Common myeloid progenitor, CD34-positive (primary cell): ENCODE measurements at regions of chr6 and their contacts with region 1.

Region 1: DNA sequence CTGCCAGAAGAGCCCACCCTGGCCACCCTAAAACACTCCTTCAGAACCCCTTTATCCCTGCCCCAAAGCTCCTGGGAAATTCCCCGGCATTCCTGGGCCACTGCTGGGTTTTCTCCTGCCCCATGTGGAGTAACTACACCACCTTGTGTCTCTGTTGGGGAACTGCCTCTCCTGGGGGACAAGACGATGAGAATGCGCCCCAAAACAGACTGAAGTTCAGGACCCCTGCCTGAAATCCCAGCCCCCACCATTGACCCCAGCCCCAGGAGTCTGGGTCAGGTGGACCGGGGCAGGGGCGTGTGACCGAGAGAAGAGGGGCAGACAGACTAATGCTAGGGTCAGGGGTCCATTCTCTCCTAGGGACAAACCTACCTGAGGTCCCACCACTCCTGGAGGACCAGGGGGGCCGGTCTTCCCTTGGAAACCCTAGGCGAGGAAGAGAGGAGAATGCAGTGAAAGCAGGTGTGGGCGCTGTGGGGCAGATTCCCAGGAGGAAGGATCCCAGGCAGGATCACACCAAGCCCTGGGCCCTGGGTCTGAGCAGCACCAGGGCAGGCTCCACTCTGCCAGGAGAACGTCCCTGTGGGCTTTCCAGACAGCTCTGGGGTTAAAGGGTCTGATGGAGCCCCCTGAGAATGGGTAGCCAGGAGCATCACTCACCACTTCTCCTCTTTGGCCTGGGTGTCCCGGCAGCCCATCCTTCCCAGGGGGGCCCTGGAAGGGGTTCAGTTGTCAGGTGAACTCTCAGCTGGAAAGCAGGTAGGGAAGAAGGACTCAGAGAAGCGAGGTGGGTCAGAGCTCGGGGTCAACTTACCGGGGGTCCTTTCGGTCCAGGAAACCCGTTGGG is 19.4 kb downstream of the COL11A2 start:
- DNase-seq: peak; percentile 29 to 44 (median 31)
- H3K4me3 ChIP-seq: no peak overlapping the region
- H3K27ac ChIP-seq: no peak overlapping the region
- H3K4me1 ChIP-seq: no peaks in the 10 kb centered on the region
- H3K27me3 ChIP-seq: peaks cover 0 to 2% (median 0%) of the 10 kb centered on the region in 5 experiments

Region 2: DNA sequence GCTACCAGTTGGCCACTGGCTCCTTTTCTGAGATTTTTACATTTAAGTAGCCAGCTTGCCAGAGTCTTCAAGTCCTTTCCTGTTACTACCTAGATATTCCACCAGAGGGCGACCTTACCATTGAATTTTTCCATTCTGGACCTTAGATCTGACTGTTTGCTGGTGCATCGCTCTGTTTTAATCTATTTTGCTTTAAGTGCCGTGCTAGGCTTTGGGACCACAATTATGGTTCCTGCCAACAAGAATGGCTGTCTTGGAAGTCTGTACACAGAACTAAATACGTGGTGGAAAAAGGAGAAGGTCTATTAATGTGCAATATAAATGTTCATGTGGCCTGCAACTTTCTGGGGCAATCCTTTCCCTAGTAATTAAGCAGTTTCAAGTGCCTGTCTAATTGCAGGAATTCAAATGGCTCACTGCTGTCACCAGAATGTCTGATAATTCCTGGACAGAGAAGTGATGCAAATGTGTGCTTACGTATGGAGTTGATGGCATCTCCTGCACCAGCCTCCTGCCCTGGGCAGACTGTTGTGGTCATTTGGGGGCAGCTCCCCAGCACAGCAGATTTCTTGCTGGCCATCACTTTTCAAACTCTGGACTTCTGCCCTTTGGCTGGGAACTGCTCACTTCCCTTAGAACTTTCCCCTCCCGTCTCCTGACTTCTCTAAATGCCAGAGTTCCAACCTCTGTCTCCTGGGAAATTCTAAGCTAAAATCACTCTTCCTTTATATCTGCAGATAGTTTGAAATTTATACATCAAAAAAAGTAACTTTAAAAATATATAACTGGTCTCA is 157.9 kb before region 1 on chr6:
- CTCF ChIA-PET with region 1: interaction called, 16 read pairs
- POLR2A ChIA-PET with region 1: no interaction called
- DNase-seq: peak; percentile 89 to 95 (median 92)
- H3K4me3 ChIP-seq: peak overlapping the region in 1 of 7 experiments; percentile 26
- H3K27ac ChIP-seq: no peak overlapping the region
- H3K4me1 ChIP-seq: peaks cover 19 to 30% (median 28%) of the 10 kb centered on the region in 4 experiments
- H3K27me3 ChIP-seq: no peaks in the 10 kb centered on the region

Region 3: DNA sequence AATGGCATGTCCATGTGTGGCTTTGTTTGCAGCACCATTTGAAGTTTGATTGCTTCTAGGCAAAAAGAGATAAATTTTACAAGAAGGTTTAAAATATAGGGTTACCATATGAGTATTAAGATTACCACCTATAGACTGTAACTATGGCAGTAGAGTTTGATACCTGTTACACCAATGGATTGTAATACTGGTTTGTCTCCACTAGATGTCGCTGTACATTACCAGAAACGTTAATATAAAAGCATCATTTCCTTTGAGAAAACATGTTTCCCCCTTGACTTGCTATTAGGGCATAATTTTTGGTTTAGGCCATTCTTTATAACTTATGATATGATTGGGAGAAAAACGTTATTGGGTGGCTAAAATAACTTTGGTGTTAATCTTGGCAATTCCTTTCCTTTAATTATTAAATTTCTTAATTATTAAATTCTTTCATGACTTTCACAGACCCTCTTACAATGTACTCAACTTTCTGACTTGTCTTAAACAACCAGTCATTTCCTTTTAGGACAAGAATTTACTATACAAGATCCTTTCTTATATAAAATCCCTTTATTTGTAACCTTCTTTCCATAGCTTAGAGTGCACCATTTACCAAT is 54.3 kb before region 1 on chr6:
- CTCF ChIA-PET with region 1: interaction called, 22 read pairs
- POLR2A ChIA-PET with region 1: no interaction called
- DNase-seq: peak; percentile 65 to 79 (median 79)
- H3K4me3 ChIP-seq: no peak overlapping the region
- H3K27ac ChIP-seq: no peak overlapping the region
- H3K4me1 ChIP-seq: peaks cover 13 to 33% (median 18%) of the 10 kb centered on the region in 4 experiments
- H3K27me3 ChIP-seq: peaks cover 3 to 20% (median 16%) of the 10 kb centered on the region in 5 experiments

Region 4: GRCh38 chr6:33126101-33126714 is 46.7 kb before region 1 on chr6:
- CTCF ChIA-PET with region 1: interaction called, 22 read pairs
- POLR2A ChIA-PET with region 1: no interaction called
- DNase-seq: peak; percentile 51 to 78 (median 66)
- H3K4me3 ChIP-seq: no peak overlapping the region
- H3K27ac ChIP-seq: no peak overlapping the region
- H3K4me1 ChIP-seq: no peaks in the 10 kb centered on the region
- H3K27me3 ChIP-seq: no peaks in the 10 kb centered on the region

Region 5: GRCh38 chr6:33161354-33162331 is 11.3 kb before region 1 on chr6:
- CTCF ChIA-PET with region 1: interaction called, 62 read pairs
- POLR2A ChIA-PET with region 1: no interaction called
- DNase-seq: peak; percentile 61 to 74 (median 73)
- H3K4me3 ChIP-seq: peak overlapping the region; percentile 19 to 78 (median 57)
- H3K27ac ChIP-seq: no peak overlapping the region
- H3K4me1 ChIP-seq: peaks cover 0 to 20% (median 14%) of the 10 kb centered on the region in 4 experiments
- H3K27me3 ChIP-seq: peaks cover 0 to 5% (median 0%) of the 10 kb centered on the region in 5 experiments

Region 6: GRCh38 chr6:33190504-33191107 is 17.7 kb after region 1 on chr6:
- CTCF ChIA-PET with region 1: interaction called, 11 read pairs
- POLR2A ChIA-PET with region 1: no interaction called
- DNase-seq: no peak
- H3K4me3 ChIP-seq: no peak overlapping the region
- H3K27ac ChIP-seq: no peak overlapping the region
- H3K4me1 ChIP-seq: peaks cover 0 to 20% (median 13%) of the 10 kb centered on the region in 4 experiments
- H3K27me3 ChIP-seq: peaks cover 7 to 34% (median 13%) of the 10 kb centered on the region in 5 experiments